ENCODE measurements at regions of chr2 and their contacts with region 1.

Region 1: GRCh38 chr2:41869542-41870264 is 178.1 kb upstream of the PKDCC start:
- DNase-seq: peak; percentile 81 to 87
- H3K4me3 ChIP-seq: no peak overlapping the region
- H3K4me3 Mint-ChIP-seq: no peak overlapping the region
- H3K27ac Mint-ChIP-seq: peak overlapping the region; percentile 68
- H3K4me1 ChIP-seq: peaks cover 71% of the 10 kb centered on the region
- H3K4me1 Mint-ChIP-seq: peaks cover 71% of the 10 kb centered on the region
- H3K27me3 ChIP-seq: no peaks in the 10 kb centered on the region
- H3K27me3 Mint-ChIP-seq: no peaks in the 10 kb centered on the region
- CTCF ChIP-seq: peak; percentile 85 to 96

Region 2: GRCh38 chr2:41814963-41815362 is 54.7 kb before region 1 on chr2:
- CTCF ChIA-PET with region 1: no interaction called
- POLR2A ChIA-PET with region 1: no interaction called
- intact Hi-C with region 1: no loop called
- DNase-seq: no peak
- H3K4me3 ChIP-seq: no peak overlapping the region
- H3K4me3 Mint-ChIP-seq: no peak overlapping the region
- H3K27ac Mint-ChIP-seq: no peak overlapping the region
- H3K4me1 ChIP-seq: peaks cover 7% of the 10 kb centered on the region; the same call in 1 of the 2 replicates
- H3K4me1 Mint-ChIP-seq: peaks cover 17% of the 10 kb centered on the region
- H3K27me3 ChIP-seq: no peaks in the 10 kb centered on the region
- H3K27me3 Mint-ChIP-seq: no peaks in the 10 kb centered on the region
- CTCF ChIP-seq: no peak

Region 3: DNA sequence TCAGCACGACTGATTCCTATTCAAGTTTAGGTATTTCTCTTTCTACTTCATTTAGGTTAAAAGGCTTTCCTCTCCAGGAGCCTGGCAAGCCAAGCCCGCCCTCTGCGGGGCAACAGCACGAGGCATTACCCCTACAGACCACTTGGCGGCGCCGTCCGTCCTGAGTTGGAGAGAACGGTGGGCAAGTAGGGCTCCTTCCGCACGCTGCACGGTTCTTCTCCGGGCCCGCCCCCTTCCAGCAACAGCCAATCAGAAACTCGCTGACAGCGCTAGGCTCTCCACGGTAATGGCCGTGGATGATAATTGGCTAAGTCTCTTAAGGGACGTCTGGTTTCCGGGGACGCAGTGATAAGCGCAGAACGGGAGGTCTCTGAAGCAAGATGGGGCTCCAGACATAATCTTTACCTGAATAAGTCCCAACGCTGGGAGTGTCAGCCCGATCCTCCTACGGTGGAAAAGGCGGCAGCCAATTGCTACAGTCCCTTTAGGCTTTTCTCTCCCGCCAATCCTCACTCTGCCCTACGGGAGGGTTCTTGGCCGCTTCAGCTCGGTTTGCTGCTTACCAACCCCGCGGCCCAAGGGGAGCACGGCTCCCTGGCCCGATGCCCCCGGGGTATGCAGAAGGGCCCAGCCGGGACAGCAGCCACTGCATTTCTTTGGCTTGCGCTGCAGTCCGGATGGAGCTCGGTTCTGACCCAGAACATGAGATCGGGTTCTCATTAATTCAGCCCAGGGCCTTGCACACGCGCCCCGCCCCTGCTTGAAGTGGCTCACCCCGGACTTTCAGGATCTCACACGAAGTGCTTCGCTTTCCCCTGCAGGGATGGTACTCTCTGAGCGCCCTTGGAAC is 28.8 kb before region 1 on chr2:
- CTCF ChIA-PET with region 1: interaction called, 10 read pairs
- POLR2A ChIA-PET with region 1: no interaction called
- intact Hi-C with region 1: loop called (anchors 1 kb)
- DNase-seq: peak; percentile 98 to 99
- H3K4me3 ChIP-seq: peak overlapping the region; percentile 56
- H3K4me3 Mint-ChIP-seq: peak overlapping the region; percentile 91
- H3K27ac Mint-ChIP-seq: peak overlapping the region; percentile 77
- H3K4me1 ChIP-seq: no peaks in the 10 kb centered on the region
- H3K4me1 Mint-ChIP-seq: no peaks in the 10 kb centered on the region
- H3K27me3 ChIP-seq: no peaks in the 10 kb centered on the region
- H3K27me3 Mint-ChIP-seq: peaks cover 3% of the 10 kb centered on the region
- CTCF ChIP-seq: peak; percentile 98 to 100

Region 4: DNA sequence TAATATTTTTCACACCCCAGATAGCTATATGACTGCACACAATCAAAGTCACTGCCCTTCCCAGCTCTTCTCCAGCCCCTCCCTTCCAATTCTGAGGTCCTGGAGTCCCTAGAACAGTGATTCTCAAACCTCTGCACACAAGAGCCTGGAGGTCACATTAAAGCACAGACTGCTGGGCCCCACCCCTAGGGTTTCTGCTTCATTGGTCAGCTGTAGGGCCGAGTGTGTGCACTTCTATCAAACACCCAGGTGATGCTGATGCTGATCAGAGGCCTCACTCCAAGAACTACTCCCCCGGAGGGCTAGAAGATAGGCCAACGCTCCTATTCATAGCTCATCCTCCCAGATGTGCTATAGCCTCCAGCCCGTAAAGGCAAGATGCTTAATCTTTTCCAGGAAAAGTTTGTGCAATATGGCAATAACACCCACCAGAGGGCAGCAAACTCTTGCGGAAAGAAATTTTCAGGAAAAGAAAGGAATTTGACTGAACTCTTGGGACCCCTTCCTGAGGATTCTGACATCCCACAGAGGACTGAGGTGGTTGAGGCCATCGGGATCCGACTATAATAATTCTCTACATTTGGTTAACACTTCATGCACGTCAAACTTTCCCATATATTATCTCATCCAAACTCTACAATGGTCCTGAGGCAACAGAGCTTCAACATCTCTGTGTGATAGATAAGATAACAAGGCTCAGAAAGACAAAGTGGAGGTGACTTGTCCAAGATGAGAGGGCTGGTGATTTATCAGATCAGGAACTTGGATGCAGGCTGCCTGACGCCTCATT is 16.1 kb before region 1 on chr2:
- CTCF ChIA-PET with region 1: interaction called, 24 read pairs
- POLR2A ChIA-PET with region 1: no interaction called
- intact Hi-C with region 1: loop called (anchors 1 kb)
- DNase-seq: peak; percentile 70 to 78
- H3K4me3 ChIP-seq: no peak overlapping the region
- H3K4me3 Mint-ChIP-seq: no peak overlapping the region
- H3K27ac Mint-ChIP-seq: peak overlapping the region; percentile 8
- H3K4me1 ChIP-seq: peaks cover 15% of the 10 kb centered on the region
- H3K4me1 Mint-ChIP-seq: peaks cover 2% of the 10 kb centered on the region
- H3K27me3 ChIP-seq: no peaks in the 10 kb centered on the region
- H3K27me3 Mint-ChIP-seq: no peaks in the 10 kb centered on the region
- CTCF ChIP-seq: peak; percentile 82 to 94

Region 5: GRCh38 chr2:41933585-41934320 is 64.0 kb after region 1 on chr2:
- CTCF ChIA-PET with region 1: interaction called, 8 read pairs
- POLR2A ChIA-PET with region 1: no interaction called
- intact Hi-C with region 1: loop called (anchors 2 kb)
- DNase-seq: no peak
- H3K4me3 ChIP-seq: no peak overlapping the region
- H3K4me3 Mint-ChIP-seq: no peak overlapping the region
- H3K27ac Mint-ChIP-seq: peak overlapping the region; percentile 80
- H3K4me1 ChIP-seq: peaks cover 53% of the 10 kb centered on the region
- H3K4me1 Mint-ChIP-seq: peaks cover 37% of the 10 kb centered on the region
- H3K27me3 ChIP-seq: no peaks in the 10 kb centered on the region
- H3K27me3 Mint-ChIP-seq: no peaks in the 10 kb centered on the region
- CTCF ChIP-seq: no peak

Region 6: GRCh38 chr2:42053791-42054701 is 184.3 kb after region 1 on chr2:
- CTCF ChIA-PET with region 1: interaction called, 44 read pairs
- POLR2A ChIA-PET with region 1: interaction called, 3 read pairs
- intact Hi-C with region 1: loop called (anchors 1 kb)
- DNase-seq: no peak
- H3K4me3 ChIP-seq: no peak overlapping the region
- H3K4me3 Mint-ChIP-seq: peak overlapping the region; percentile 69
- H3K27ac Mint-ChIP-seq: peak overlapping the region; percentile 98
- H3K4me1 ChIP-seq: peaks cover 85% of the 10 kb centered on the region
- H3K4me1 Mint-ChIP-seq: peaks cover 60% of the 10 kb centered on the region
- H3K27me3 ChIP-seq: no peaks in the 10 kb centered on the region
- H3K27me3 Mint-ChIP-seq: no peaks in the 10 kb centered on the region
- CTCF ChIP-seq: no peak

Region 7: GRCh38 chr2:42086500-42086953 is 216.8 kb after region 1 on chr2:
- CTCF ChIA-PET with region 1: interaction called, 72 read pairs
- POLR2A ChIA-PET with region 1: interaction called, 3 read pairs
- intact Hi-C with region 1: loop called (anchors 1 kb)
- DNase-seq: peak; percentile 61 to 78
- H3K4me3 ChIP-seq: no peak overlapping the region
- H3K4me3 Mint-ChIP-seq: no peak overlapping the region
- H3K27ac Mint-ChIP-seq: no peak overlapping the region
- H3K4me1 ChIP-seq: peaks cover 57% of the 10 kb centered on the region
- H3K4me1 Mint-ChIP-seq: peaks cover 66% of the 10 kb centered on the region
- H3K27me3 ChIP-seq: no peaks in the 10 kb centered on the region
- H3K27me3 Mint-ChIP-seq: no peaks in the 10 kb centered on the region
- CTCF ChIP-seq: peak; percentile 74 to 88

Region 8: GRCh38 chr2:42171396-42171980 is 301.8 kb after region 1 on chr2:
- CTCF ChIA-PET with region 1: no interaction called
- POLR2A ChIA-PET with region 1: no interaction called
- intact Hi-C with region 1: no loop called
- DNase-seq: no peak
- H3K4me3 ChIP-seq: peak overlapping the region; percentile 89
- H3K4me3 Mint-ChIP-seq: no peak overlapping the region
- H3K27ac Mint-ChIP-seq: no peak overlapping the region
- H3K4me1 ChIP-seq: peaks cover 29% of the 10 kb centered on the region
- H3K4me1 Mint-ChIP-seq: peaks cover 27% of the 10 kb centered on the region
- H3K27me3 ChIP-seq: no peaks in the 10 kb centered on the region
- H3K27me3 Mint-ChIP-seq: no peaks in the 10 kb centered on the region
- CTCF ChIP-seq: no peak

Region 9: DNA sequence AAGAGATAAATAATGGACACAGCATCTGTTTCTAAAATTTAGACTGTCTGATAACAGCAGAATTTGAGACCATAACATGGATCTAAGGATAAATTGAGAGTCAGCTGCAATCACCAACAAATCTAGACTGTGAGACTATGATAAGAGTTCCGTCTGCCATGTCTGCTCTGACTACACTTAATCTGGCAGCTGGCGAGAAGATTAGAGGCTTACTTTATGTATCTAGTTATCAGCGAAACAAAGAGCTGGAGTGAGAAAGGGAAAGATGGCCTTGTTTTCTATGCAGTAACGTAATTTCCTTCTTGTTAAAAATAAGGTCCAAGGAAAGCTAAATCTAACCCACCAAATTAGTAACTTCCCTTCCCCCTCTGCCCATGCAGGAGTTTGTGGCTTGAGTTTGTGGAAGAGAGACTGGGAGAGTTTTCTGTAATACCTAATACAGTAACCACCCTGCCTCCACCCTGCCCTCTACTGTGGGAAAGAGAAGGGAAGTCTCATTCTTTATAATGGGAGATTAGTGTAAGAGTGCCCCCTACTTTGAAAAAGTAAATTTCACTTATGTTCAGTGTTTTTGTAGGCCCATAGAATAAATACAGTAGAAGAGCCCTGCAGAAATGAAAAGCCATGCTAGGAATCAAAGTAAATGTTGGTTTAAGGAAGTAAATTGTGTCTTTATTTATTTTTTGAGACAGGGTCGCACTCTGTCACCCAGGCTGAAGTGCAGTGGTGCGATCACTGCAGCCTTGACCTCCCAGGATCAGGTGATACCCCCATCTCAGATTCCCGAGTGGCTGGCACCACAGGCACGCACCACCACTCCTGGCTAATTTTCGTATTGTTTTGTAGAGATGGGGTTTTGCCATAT is 326.9 kb after region 1 on chr2:
- CTCF ChIA-PET with region 1: no interaction called
- POLR2A ChIA-PET with region 1: no interaction called
- intact Hi-C with region 1: loop called (anchors 2 kb)
- DNase-seq: peak; percentile 68 to 77
- H3K4me3 ChIP-seq: no peak overlapping the region
- H3K4me3 Mint-ChIP-seq: peak overlapping the region; percentile 7
- H3K27ac Mint-ChIP-seq: peak overlapping the region; percentile 10
- H3K4me1 ChIP-seq: peaks cover 51% of the 10 kb centered on the region
- H3K4me1 Mint-ChIP-seq: peaks cover 56% of the 10 kb centered on the region
- H3K27me3 ChIP-seq: no peaks in the 10 kb centered on the region
- H3K27me3 Mint-ChIP-seq: no peaks in the 10 kb centered on the region
- CTCF ChIP-seq: peak; percentile 65 to 85

Measured in Caco-2 (cell line).